H1 (cell line): ENCODE measurements at regions of chr19 and their contacts with region 1.

Region 1: GRCh38 chr19:3932931-3933810 is at the start of gene NMRK2:
- DNase-seq: peak; percentile 79 to 88
- H3K4me3 ChIP-seq: peak within 1 kb of the TSS; percentile 75 to 96 (median 87)
- H3K27ac ChIP-seq: peak within 1 kb of the TSS; percentile 92; the same call in 1 of the 2 replicates
- H3K4me1 ChIP-seq: peaks cover 0 to 2% (median 0%) of the 10 kb centered on the region in 4 experiments; a peak in 1 of 7 replicates
- H3K27me3 ChIP-seq: no peaks in the 10 kb centered on the region; a peak in 1 of 7 replicates
- CTCF ChIP-seq: no peak
- EP300 ChIP-seq: 0 out of 3 replicates have a peak, but pooled peaks of 1 of the 2 experiments have one; percentile 19
- POLR2A ChIP-seq: peak in 1 of 2 experiments; percentile 85; a peak in 2 of 3 replicates
- RAD21 ChIP-seq: no peak
- total RNA-seq, gene NMRK2: 86.2 and 87.4 TPM in 2 replicates

Region 2: GRCh38 chr19:3880471-3881271 is 52.5 kb before region 1 on chr19 and contains the start of gene ATCAY:
- CTCF ChIA-PET with region 1: no interaction called
- POLR2A ChIA-PET with region 1: interaction called, 10 read pairs
- DNase-seq: peak in 1 of 2 experiments; percentile 71
- H3K4me3 ChIP-seq: peak within 1 kb of the TSS; percentile 55 to 79 (median 75)
- H3K27ac ChIP-seq: no peak within 1 kb of the TSS
- H3K4me1 ChIP-seq: peaks cover 0 to 4% (median 0%) of the 10 kb centered on the region in 4 experiments; a peak in 2 of 7 replicates
- H3K27me3 ChIP-seq: no peaks in the 10 kb centered on the region; a peak in 1 of 7 replicates
- CTCF ChIP-seq: no peak
- EP300 ChIP-seq: no peak
- POLR2A ChIP-seq: peak in 1 of 2 experiments; percentile 76; a peak in 1 of 3 replicates
- RAD21 ChIP-seq: no peak
- total RNA-seq, gene ATCAY: 31.6 and 33.8 TPM in 2 replicates

Region 3: DNA sequence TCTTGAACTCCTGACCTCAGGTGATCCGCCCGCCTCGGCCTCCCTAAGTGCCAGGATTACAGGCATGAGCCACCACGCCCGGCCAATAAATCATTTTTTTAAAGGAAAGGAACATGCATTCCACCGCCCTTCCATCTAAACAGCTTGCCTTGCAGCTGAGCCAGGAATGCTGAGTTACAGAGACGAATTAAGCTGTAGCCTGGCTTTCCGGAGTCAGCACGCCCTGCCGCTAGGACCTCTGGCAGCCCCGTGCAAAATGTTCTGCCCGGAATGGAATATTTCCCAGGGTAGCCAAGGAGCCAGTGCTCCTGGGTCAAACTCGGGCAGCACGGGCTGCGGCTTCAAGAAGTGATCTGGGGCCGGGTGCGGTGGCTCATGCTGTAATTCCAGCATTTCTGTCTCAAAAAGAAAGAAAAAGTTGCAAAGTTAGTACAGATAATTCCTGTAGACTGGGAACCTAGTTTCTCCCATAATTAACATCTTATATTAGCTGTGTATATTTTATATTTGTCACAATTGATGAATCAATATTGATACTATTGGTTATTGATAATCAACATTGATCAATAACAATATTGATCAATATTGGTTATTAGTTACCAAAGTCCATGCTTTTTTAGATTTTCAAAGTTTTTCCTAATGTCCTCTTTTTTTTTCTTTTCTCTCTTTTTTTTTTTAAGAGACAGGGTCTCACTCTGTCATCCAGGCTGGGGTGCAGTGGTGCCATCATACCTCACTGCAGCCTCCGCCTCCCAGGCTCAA is 33.5 kb before region 1 on chr19:
- CTCF ChIA-PET with region 1: no interaction called
- POLR2A ChIA-PET with region 1: no interaction called
- DNase-seq: no peak
- H3K4me3 ChIP-seq: no peak overlapping the region
- H3K27ac ChIP-seq: no peak overlapping the region
- H3K4me1 ChIP-seq: no peaks in the 10 kb centered on the region
- H3K27me3 ChIP-seq: no peaks in the 10 kb centered on the region
- CTCF ChIP-seq: no peak
- EP300 ChIP-seq: no peak
- POLR2A ChIP-seq: no peak
- RAD21 ChIP-seq: no peak

Region 4: GRCh38 chr19:3945838-3946237 is 12.7 kb after region 1 on chr19:
- CTCF ChIA-PET with region 1: interaction called, 6 read pairs
- POLR2A ChIA-PET with region 1: interaction called, 63 read pairs
- DNase-seq: no peak
- H3K4me3 ChIP-seq: no peak overlapping the region
- H3K27ac ChIP-seq: no peak overlapping the region
- H3K4me1 ChIP-seq: peaks cover 0 to under 1% (median 0%) of the 10 kb centered on the region in 4 experiments; a peak in 2 of 7 replicates
- H3K27me3 ChIP-seq: no peaks in the 10 kb centered on the region
- CTCF ChIP-seq: no peak
- EP300 ChIP-seq: no peak
- POLR2A ChIP-seq: no peak
- RAD21 ChIP-seq: no peak

Region 5: DNA sequence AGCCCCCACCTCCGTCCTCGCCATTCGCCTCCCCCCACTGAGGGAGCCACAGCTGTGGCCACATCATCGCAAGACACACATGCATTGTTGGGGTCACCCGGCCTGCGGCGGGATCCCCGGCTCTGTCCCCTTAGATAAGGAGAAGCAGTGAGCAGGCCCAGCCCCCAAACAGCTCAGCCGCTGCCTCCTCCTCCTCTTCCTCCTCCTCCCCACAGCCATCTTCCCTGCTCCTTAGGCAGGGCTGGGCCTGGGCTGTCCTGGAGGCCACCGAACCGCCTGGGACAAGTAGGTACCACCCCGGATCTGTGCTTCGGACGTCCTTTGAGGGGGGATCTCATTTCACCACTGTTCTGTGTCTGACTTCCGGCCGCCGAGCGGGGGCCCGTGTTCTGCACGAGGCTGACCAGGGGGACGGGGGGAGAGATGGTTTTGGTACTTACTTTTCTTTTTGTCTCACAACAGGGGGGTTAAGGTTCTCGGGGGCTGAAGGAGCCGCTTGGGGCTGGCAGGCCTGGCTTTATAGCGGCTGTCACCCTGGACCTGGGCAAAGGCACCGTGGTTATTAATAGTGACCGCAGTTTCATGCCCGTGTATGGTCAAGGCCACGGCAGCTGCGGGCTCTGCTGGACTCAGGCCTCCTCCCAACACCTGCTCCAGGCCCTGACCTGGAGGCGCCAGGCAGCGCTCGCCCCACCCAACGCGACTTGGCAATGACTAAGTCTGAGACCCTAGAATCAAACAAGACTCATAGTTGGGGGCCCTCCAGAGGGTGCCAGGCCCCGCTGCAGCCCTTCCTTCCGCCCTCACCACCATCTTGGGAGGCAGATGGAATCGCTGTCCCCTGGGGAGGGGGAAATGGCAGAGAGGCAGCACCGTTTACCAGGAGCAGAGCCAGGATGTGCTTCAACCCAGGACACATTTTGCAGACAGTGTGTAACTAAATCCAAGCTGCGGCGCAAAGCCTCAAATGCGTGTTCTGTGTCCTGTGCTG is 18.0 kb after region 1 on chr19:
- CTCF ChIA-PET with region 1: interaction called, 6 read pairs
- POLR2A ChIA-PET with region 1: interaction called, 63 read pairs
- DNase-seq: no peak
- H3K4me3 ChIP-seq: no peak overlapping the region
- H3K27ac ChIP-seq: no peak overlapping the region
- H3K4me1 ChIP-seq: peaks cover 0 to 6% (median 2%) of the 10 kb centered on the region in 4 experiments; a peak in 4 of 7 replicates
- H3K27me3 ChIP-seq: no peaks in the 10 kb centered on the region
- CTCF ChIP-seq: no peak
- EP300 ChIP-seq: no peak
- POLR2A ChIP-seq: no peak
- RAD21 ChIP-seq: no peak

Region 6: DNA sequence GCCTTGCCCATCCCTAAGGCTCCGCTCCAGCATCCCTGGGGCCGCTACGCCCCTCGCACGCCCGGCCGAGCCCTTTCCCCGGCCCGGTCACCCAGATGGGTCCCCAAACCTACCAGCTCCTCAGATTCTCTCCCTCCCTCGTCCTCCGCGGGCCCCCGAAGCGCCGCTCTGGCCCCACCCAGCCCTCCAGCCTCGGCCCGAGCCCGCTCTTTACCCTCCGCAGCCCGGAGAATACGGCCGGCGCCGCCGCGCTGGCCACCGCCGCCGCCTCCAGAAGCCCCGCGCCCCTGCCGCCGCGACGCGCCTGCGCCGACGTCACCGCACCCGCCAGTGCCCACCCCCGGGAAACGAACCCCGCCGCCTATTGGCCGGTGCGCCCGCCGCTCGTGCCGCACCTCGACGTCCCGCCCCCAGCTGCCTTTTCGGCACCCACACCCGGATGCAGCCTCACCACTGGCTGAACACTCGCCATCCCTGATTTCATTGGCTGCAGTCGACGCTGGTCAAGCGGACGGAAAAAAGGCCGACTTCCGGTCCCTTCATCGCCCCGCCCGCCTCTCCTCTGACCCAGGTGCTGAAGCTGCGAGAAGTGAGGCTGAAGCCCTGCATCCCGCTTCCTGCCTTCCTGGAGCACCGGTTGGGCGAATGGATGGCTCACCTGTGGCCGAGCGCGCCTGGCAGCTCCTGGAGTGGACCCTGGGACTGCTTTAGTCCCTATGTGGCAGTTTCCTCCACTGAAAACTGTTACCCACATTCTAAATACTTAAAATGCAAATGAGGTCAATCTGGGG is 37.8 kb after region 1 on chr19 and contains the start of gene DAPK3:
- CTCF ChIA-PET with region 1: interaction called, 7 read pairs
- POLR2A ChIA-PET with region 1: interaction called, 52 read pairs
- DNase-seq: peak; percentile 97 to 98
- H3K4me3 ChIP-seq: peak within 1 kb of the TSS; percentile 69 to 92 (median 75)
- H3K27ac ChIP-seq: peak within 1 kb of the TSS; percentile 78; the same call in 1 of the 2 replicates
- H3K4me1 ChIP-seq: peaks cover 2 to 14% (median 6%) of the 10 kb centered on the region in 4 experiments; a peak in 6 of 7 replicates
- H3K27me3 ChIP-seq: no peaks in the 10 kb centered on the region
- CTCF ChIP-seq: no peak
- EP300 ChIP-seq: no peak
- POLR2A ChIP-seq: peak; percentile 37 to 82
- RAD21 ChIP-seq: no peak
- total RNA-seq, gene DAPK3: 78.1 and 80.8 TPM in 2 replicates

Region 7: DNA sequence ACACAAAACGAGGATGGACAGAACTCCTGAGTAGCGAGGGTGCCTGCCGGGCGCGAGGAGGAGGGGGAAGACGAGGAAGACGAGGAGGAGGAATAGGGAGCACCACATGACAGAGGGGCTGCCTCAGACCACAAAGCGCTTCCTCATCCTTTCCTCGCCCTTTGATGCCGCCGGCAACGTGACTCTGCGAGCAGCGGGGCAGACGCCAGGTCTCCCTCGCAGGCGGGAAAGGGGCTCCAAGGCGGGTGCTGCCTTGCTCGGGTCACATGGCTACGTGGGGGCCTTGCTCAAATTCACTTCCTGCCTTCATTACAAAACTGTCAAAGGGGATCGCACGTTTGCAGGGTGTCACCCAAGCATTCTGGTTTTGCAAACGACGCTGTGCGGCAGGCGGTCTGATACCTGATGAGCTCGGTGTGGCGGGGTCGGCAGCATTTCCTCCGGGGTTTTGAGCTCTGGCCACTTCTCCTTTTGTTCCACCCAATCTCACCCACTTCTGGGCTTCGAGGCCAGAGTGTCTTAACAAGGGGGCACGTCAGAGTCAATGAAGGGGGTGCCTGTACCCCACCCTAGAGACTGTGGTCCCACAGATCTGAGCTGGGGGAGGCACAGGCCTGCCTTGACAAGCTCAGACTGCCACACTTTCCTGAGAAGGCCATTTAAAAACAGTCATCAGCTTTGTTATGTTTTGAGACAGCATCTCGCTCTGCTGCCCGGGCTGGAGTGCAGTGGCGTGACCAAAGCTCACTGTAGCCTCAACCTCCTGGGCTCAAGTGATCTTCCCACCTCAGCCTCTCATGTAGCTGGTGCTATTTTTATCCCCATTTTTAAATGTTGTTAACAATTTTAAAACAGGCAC is 175.8 kb after region 1 on chr19:
- CTCF ChIA-PET with region 1: no interaction called
- POLR2A ChIA-PET with region 1: no interaction called
- DNase-seq: no peak
- H3K4me3 ChIP-seq: no peak overlapping the region
- H3K27ac ChIP-seq: no peak overlapping the region
- H3K4me1 ChIP-seq: no peaks in the 10 kb centered on the region
- H3K27me3 ChIP-seq: no peaks in the 10 kb centered on the region
- CTCF ChIP-seq: no peak
- EP300 ChIP-seq: no peak
- POLR2A ChIP-seq: no peak
- RAD21 ChIP-seq: no peak

Region 8: GRCh38 chr19:4130744-4131438 is 197.7 kb after region 1 on chr19:
- CTCF ChIA-PET with region 1: no interaction called
- POLR2A ChIA-PET with region 1: no interaction called
- DNase-seq: no peak
- H3K4me3 ChIP-seq: no peak overlapping the region
- H3K27ac ChIP-seq: no peak overlapping the region
- H3K4me1 ChIP-seq: no peaks in the 10 kb centered on the region
- H3K27me3 ChIP-seq: no peaks in the 10 kb centered on the region
- CTCF ChIP-seq: no peak
- EP300 ChIP-seq: no peak
- POLR2A ChIP-seq: no peak
- RAD21 ChIP-seq: no peak